Activated B cell treated with CpG ODN at 0.5 μM for 24 hours (primary cell): ENCODE measurements at regions of chr11 and their contacts with region 1.

Region 1: DNA sequence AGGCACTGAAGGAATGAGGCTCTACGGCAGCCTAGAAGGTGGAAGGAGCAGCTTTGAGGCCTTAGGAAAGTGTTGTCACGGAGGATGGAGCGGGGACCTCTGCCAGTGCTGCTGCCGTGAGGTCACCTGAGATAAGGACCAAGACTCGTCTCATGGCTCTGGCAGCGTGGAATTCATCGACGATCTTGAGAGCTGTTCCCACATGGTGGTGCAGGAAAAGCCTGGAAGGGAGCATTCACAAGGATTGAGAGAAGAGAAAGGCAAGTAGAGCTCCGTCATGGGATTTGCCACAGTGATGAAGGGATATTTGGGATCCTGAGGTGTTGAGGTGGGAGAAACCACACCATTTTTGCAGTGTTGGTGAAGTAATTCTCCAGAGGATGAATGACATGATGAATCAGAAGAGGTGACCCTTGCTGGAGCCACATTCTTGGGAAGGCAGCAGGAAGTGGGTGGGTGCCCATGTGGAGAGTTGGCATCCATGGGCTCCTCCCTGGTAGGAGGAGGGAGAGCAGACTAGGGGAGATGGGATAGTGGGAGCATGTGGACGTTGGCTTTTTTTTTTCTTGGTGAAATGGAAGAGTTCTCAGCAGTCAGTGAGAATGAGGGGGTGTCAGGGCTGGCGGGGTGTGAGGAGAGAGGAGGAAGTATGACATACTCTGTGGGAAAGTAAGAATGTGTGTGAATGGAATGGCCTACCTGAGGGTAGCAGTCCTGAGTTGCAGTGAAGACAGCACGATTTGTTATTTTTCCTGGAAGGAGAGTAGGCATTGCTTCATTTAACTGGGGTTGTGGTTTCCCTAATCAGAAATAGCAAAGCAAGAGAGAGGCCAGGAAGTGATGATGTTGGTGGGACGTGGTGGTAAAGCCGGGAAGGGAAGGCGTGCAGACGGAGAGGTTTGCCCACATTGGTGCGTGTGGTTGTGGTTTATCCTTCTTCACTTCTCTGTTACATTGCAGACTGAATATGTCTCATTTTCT is 11.1 kb downstream of the PPP6R3 start:
- DNase-seq: no peak
- ATAC-seq: no peak
- H3K4me3 Mint-ChIP-seq: peak overlapping the region; percentile 64
- H3K27ac Mint-ChIP-seq: peak overlapping the region; percentile 60
- H3K4me1 Mint-ChIP-seq: peaks cover 77% of the 10 kb centered on the region
- H3K27me3 Mint-ChIP-seq: no peaks in the 10 kb centered on the region
- CTCF ChIP-seq: no peak

Region 2: DNA sequence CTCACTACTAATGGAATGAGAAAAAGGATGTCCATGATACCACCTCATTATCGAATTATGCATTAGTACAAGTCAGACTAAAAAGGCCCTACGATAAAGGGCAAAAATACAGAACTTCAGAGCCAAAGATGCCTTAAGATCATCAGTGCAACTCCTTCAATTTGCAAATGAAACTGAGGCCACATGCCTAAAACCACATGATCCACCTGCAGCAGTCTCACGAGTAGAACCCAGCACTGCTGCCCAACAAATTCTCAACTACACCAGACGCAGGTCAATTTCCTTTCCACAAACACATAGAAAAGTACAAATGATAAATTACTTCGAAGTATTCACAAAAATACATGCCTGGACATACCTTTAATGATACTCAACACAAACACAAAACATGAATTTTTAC is 278.6 kb before region 1 on chr11:
- CTCF ChIA-PET with region 1: no interaction called
- POLR2A ChIA-PET with region 1: interaction called, 13 read pairs
- intact Hi-C with region 1: no loop called
- DNase-seq: no peak
- ATAC-seq: no peak
- H3K4me3 Mint-ChIP-seq: peak overlapping the region; percentile 19
- H3K27ac Mint-ChIP-seq: no peak overlapping the region
- H3K4me1 Mint-ChIP-seq: peaks cover 67% of the 10 kb centered on the region
- H3K27me3 Mint-ChIP-seq: no peaks in the 10 kb centered on the region
- CTCF ChIP-seq: no peak

Region 3: GRCh38 chr11:69489036-69489747 is 1017.5 kb after region 1 on chr11:
- CTCF ChIA-PET with region 1: no interaction called
- POLR2A ChIA-PET with region 1: no interaction called
- intact Hi-C with region 1: no loop called
- DNase-seq: no peak
- ATAC-seq: no peak
- H3K4me3 Mint-ChIP-seq: no peak overlapping the region
- H3K27ac Mint-ChIP-seq: no peak overlapping the region
- H3K4me1 Mint-ChIP-seq: no peaks in the 10 kb centered on the region
- H3K27me3 Mint-ChIP-seq: no peaks in the 10 kb centered on the region
- CTCF ChIP-seq: no peak